Kidney (tissue), 22 donors: ENCODE measurements at regions of chr2 and their contacts with region 1.

Region 1: DNA sequence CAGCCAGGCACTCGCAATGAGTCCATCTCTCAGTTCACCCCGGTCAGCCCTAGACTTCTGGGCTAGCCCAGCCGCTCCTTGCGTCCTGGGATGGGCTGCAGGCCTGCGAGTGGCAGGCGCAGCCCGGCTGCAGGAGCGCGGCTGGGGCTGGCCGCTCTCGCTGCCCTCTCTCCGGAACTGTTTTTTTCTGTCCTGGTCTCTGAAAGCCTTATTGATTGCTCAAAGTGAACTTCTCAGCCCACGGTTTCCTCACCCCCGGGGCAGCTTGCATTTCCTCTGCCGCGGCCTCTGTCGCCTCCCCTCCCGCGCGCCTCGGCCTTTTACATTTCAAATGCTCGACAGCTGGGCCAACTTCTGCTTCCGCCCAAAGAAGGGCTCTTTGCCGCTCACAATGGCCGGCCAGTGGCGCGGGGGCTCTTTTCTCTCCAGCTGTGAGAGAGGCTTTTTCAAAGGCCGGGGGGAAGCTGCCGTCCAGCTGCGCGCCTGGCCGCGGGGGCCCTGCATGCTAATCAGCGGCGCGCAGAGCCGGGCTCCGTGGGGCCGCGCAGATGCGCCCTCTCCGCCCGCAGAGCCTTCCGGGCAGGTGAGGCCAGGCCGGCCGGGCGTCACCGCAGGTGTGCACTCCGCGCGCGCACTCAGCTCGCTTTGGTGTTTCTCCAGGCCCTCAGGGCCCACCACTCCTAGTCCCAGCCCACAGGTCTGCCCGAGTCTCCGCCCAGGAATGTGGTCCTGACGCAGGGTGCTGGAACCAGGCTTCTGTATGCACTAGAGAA is 513.8 kb downstream of the RNF144A start:
- DNase-seq: peak; percentile 68 to 81 (median 77)
- H3K4me3 ChIP-seq: peak overlapping the region in 1 of 3 donors; percentile 27
- H3K27ac ChIP-seq: no peak overlapping the region
- H3K4me1 ChIP-seq: peaks cover 0 to 3% (median 0%) of the 10 kb centered on the region in 3 donors
- H3K27me3 ChIP-seq: no peaks in the 10 kb centered on the region
- CTCF ChIP-seq: no peak

Region 2: GRCh38 chr2:7037340-7038333 is 393.4 kb before region 1 on chr2:
- intact Hi-C with region 1: no loop called
- DNase-seq: peak; percentile 80 to 89 (median 83)
- H3K4me3 ChIP-seq: no peak overlapping the region
- H3K27ac ChIP-seq: no peak overlapping the region
- H3K4me1 ChIP-seq: peaks cover 0 to 8% (median 3%) of the 10 kb centered on the region in 3 donors
- H3K27me3 ChIP-seq: no peaks in the 10 kb centered on the region
- CTCF ChIP-seq: peak; percentile 85

Region 3: DNA sequence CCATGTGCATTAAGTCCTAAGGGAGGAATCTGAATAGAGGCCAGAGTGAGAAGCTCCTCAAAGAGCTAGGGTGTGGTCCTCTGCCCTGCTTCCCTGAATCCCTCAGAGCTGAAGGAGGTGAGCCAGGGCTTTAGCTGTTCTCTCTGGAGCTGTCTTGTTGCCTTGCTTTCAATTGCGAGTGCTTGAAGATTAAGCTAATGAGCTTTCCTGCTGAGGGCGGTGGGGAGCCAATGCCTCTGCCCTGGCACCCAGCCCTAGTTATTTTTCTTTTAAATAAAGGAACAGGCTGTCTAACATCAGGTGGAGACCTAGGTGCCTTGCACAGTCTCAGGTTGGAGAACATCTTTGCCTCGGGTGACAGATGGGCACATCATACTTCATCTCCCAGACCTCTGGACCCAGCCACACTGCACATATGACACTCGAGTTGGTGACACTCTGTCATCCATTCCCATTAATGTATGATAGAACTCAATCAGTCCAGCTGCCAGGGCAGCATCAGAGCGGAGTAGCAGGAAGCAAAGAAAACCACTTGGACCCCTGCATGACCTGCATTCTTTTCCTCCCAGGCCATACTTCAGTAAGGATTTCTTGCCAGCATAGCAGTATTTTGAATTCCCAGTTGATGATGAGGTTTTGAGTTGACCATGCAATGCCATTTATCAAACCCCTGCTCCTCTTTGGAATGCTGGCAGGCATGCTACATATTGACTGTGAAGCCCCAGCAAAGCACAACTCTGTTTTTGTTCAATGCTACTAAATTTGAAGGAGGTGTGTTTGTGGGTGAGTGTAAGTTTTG is 221.1 kb before region 1 on chr2:
- intact Hi-C with region 1: no loop called
- DNase-seq: no peak
- H3K4me3 ChIP-seq: no peak overlapping the region
- H3K27ac ChIP-seq: no peak overlapping the region
- H3K4me1 ChIP-seq: no peaks in the 10 kb centered on the region
- H3K27me3 ChIP-seq: no peaks in the 10 kb centered on the region
- CTCF ChIP-seq: no peak

Region 4: DNA sequence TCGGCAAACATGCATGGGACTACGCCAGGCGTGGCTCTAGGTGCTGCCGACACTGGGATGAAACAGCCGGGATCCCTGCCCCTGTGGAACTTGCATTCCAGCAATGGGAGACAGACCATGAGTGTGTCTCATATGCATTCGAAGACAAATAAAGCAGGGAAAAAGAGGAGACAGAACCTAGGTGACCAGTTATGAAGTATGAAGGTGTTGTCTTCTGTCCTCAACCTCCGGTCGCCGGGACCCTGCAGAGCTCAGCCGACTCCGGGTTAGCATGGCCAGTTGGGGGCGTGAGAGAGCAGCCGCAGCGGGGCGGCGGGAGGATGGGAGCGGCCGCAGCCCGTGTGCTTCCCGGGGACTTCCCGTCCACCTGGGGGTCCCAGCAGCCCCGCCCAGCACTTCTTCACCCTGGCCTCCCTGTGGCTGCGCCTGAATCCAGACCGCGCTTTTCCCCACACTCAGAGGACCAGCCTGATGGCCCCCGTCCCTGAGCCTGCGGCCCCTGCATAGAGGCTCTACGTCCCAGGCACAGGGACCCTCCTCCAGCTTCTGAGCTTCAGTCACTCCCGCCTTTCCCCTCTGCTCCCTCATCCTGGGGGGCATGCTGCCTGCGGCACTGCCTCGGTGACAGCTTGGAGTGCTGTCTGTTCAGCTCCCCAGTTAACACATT is 1262.2 kb after region 1 on chr2:
- intact Hi-C with region 1: loop called (anchors 10 kb)
- DNase-seq: peak; percentile 71 to 76 (median 71)
- H3K4me3 ChIP-seq: peak overlapping the region in 2 of 3 donors; percentile 32 to 38
- H3K27ac ChIP-seq: no peak overlapping the region
- H3K4me1 ChIP-seq: peaks cover 0 to 6% (median 0%) of the 10 kb centered on the region in 3 donors
- H3K27me3 ChIP-seq: no peaks in the 10 kb centered on the region
- CTCF ChIP-seq: peak; percentile 30